Psoas muscle (tissue), 8 donors: ENCODE measurements at regions of chr14 and their contacts with region 1.

Region 1: DNA sequence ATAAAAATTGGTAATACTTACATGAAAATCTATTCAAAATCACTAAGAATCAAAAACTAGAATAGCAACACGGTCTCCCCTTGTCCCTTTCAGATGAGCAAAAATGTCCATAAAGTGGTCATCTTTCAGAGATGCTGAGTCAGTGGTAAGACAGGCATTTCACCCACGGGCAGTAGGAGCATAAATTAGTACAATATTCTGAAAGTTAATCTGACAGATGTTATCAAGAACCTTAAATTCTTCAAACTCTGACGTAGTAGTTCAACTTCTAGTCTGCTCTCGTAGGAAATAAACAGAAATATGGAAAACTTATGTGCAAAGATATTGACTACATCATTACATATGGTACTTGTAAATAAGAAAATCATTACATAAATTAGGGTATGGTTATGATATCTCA is 33.1 kb upstream of the GNPNAT1 start:
- DNase-seq: no peak
- ATAC-seq: no peak
- H3K4me3 ChIP-seq: no peak overlapping the region
- H3K27ac ChIP-seq: no peak overlapping the region
- H3K4me1 ChIP-seq: no peaks in the 10 kb centered on the region
- H3K27me3 ChIP-seq: no peaks in the 10 kb centered on the region
- CTCF ChIP-seq: no peak

Region 2: GRCh38 chr14:52711666-52712065 is 112.8 kb before region 1 on chr14:
- intact Hi-C with region 1: no loop called
- DNase-seq: no peak
- ATAC-seq: no peak
- H3K4me3 ChIP-seq: no peak overlapping the region
- H3K27ac ChIP-seq: peak overlapping the region; percentile 5
- H3K4me1 ChIP-seq: peaks cover 24% of the 10 kb centered on the region
- H3K27me3 ChIP-seq: no peaks in the 10 kb centered on the region
- CTCF ChIP-seq: no peak

Region 3: DNA sequence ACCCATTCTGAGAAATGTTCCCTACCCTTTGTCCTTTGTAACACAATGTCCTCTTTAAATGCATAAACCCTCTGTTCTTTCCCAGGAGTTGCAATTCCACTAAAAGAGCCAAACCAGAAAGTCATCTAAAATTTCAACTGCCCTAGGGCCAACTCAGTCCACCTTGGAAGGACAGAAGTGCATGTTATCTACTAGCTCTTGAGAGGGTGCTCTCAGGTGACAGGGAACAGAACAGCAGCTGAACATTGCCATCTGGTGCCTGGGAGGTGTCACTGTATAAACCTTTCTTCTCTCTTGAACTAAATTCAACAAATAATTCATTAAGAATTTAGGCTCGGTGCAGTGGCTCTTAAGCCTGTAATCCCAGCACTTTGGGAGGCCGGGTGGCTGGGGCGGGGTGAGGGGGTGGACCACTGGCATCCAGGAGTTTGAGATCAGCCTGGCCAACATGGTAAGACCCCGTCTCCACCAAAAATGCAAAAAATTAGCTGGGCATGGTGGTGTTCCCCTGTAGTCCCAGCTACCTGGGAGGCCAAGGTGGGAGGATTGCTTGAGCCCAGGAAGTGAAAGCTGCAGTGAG is 136.6 kb after region 1 on chr14:
- intact Hi-C with region 1: loop called (anchors 2 kb)
- DNase-seq: peak; percentile 29 to 55
- ATAC-seq: peak; percentile 89 to 97 (median 93)
- H3K4me3 ChIP-seq: no peak overlapping the region
- H3K27ac ChIP-seq: peak overlapping the region; percentile 56
- H3K4me1 ChIP-seq: peaks cover 4% of the 10 kb centered on the region
- H3K27me3 ChIP-seq: no peaks in the 10 kb centered on the region
- CTCF ChIP-seq: peak; percentile 73

Region 4: GRCh38 chr14:53306267-53306721 is 481.8 kb after region 1 on chr14:
- intact Hi-C with region 1: loop called (anchors 5 to 10 kb)
- DNase-seq: peak; percentile 57 to 62
- ATAC-seq: peak; percentile 49 to 86 (median 62)
- H3K4me3 ChIP-seq: peak overlapping the region; percentile 59
- H3K27ac ChIP-seq: no peak overlapping the region
- H3K4me1 ChIP-seq: no peaks in the 10 kb centered on the region
- H3K27me3 ChIP-seq: no peaks in the 10 kb centered on the region
- CTCF ChIP-seq: peak; percentile 77